ENCODE measurements at regions of chr2 and their contacts with region 1.

Region 1: GRCh38 chr2:186589612-186590349 is at the start of gene ITGAV:
- DNase-seq: peak; percentile 86 to 87
- ATAC-seq: peak; percentile 88 to 90
- H3K4me3 ChIP-seq: peak within 1 kb of the TSS; percentile 69 to 98 (median 73)
- H3K27ac ChIP-seq: peak within 1 kb of the TSS; percentile 88 to 98 (median 92)
- H3K4me1 ChIP-seq: peaks cover 23 to 38% of the 10 kb centered on the region in 2 donors
- H3K27me3 ChIP-seq: no peaks in the 10 kb centered on the region
- CTCF ChIP-seq: peak in 1 of 5 experiments; percentile 7
- POLR2A ChIP-seq: peak; percentile 79 to 89
- total RNA-seq, gene ITGAV: 30.0 to 63.1 (median 47.4) TPM

Region 2: DNA sequence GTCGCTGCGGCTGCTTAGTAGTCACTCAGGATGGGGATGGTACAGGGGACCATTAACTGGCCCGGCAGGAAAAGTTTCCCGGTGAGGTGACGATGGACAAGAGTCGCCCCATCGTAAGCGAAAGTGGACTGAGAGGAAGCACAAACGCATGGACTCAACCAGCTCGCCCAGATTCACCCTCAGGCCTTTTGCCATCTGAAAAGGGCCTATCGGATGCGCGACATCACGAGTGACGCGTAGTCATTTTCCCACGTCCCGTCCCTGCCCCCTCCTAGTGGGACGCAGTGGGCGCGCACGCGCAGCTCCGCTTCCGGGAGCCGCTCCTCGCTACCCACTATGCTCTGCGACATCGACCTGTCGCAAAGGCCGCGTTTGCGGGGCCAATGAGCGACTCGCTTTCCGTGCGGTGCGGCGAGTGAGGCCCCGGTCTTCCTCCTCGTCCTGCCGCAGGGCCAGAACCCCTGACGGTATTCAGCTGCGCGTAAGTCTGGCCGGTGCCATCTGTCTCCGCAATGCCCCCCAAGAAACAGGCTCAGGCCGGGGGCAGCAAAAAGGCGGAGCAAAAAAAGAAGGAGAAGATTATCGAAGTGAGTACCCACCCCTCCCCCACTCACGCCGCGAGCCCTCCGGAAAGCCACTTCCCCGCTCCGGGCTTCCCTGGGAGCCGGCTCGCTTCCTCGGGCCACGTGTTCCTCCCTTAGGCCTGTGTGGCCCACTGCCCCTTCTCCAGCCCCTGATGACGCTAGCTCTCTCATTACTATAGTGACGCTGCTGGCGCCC is 103.7 kb before region 1 on chr2 and contains the start of gene ZC3H15:
- in situ Hi-C with region 1: loop called in 1 of 4 experiments (anchors 10 kb)
- intact Hi-C with region 1: loop called (anchors 2 kb)
- DNase-seq: peak; percentile 95 to 97
- ATAC-seq: peak; percentile 95 to 96
- H3K4me3 ChIP-seq: peak within 1 kb of the TSS; percentile 90 to 99 (median 92)
- H3K27ac ChIP-seq: peak within 1 kb of the TSS; percentile 94 to 97 (median 96)
- H3K4me1 ChIP-seq: peaks cover 48 to 52% of the 10 kb centered on the region in 2 donors
- H3K27me3 ChIP-seq: no peaks in the 10 kb centered on the region
- CTCF ChIP-seq: no peak
- POLR2A ChIP-seq: peak; percentile 88 to 92
- total RNA-seq, gene ZC3H15: 56.3 to 68.9 (median 63.0) TPM

Region 3: GRCh38 chr2:186496401-186496800 is 93.4 kb before region 1 on chr2:
- in situ Hi-C with region 1: loop called in 1 of 4 experiments (anchors 10 kb)
- intact Hi-C with region 1: no loop called
- DNase-seq: no peak
- ATAC-seq: no peak
- H3K4me3 ChIP-seq: no peak overlapping the region
- H3K27ac ChIP-seq: no peak overlapping the region
- H3K4me1 ChIP-seq: peaks cover 27 to 31% of the 10 kb centered on the region in 2 donors
- H3K27me3 ChIP-seq: no peaks in the 10 kb centered on the region
- CTCF ChIP-seq: no peak
- POLR2A ChIP-seq: no peak

Region 4: DNA sequence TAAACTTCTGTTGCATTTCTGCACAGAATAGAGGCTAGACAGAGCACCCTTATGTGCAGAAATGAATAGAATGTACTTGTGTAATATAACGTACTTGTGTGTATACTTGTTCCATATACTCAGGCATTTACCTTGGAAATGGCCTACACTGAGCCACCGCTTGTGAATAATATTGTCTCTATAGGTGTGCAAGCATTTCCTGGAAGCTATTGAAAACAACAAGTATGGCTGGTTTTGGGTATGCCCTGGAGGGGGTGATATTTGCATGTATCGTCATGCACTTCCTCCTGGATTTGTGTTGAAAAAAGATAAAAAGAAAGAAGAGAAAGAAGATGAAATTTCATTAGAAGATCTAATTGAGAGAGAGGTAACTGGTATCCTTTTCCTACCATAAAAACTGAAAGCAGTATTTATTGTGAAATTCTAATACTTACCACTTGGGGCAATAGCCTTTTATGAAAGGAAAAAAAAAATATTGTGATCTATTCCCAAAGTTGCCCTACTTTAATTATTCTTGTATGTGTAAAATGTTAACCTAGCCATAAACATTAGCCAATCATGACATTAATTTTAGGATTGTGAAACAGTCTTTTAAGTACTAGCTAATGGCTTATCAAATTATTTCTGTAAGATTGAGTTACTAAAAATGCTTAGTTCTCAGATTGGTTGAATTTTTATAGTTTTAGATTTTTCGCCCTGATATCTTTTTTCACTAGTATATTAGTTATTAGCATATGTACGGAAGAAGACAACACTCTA is 85.8 kb before region 1 on chr2:
- in situ Hi-C with region 1: loop called in 1 of 4 experiments (anchors 10 kb)
- intact Hi-C with region 1: loop called (anchors 5 kb)
- DNase-seq: no peak
- ATAC-seq: no peak
- H3K4me3 ChIP-seq: no peak overlapping the region
- H3K27ac ChIP-seq: no peak overlapping the region
- H3K4me1 ChIP-seq: no peaks in the 10 kb centered on the region
- H3K27me3 ChIP-seq: no peaks in the 10 kb centered on the region
- CTCF ChIP-seq: peak; percentile 18 to 60 (median 55)
- POLR2A ChIP-seq: no peak

Region 5: DNA sequence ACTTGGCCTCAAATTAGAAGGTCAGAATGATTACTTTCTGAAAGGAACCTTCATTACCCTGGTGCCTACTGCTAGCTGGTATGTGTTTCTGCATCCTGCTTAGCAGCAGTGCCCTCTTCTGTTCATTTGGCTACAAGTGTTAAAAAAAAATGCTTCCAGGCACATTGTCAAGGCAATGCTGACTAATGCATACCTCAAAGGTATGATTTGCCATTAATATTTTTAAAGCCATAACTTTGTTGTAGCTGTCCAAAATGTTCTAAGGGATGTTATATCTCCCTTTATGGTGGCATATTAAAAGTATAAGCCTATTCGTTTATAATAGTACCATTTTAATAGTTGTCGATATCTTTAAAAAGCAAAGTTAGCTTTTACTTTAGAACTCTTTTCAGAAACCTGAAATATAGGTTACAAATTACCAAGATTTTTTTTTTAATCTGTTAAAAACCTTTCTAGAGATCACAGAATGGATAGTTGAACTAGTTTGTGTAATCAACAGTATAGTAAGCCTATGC is 52.1 kb after region 1 on chr2:
- in situ Hi-C with region 1: no loop called
- intact Hi-C with region 1: loop called (anchors 5 kb)
- DNase-seq: peak in 1 of 2 donors; percentile 22
- ATAC-seq: peak; percentile 88 to 96
- H3K4me3 ChIP-seq: no peak overlapping the region
- H3K27ac ChIP-seq: peak overlapping the region in 1 of 4 donors; percentile 11
- H3K4me1 ChIP-seq: no peaks in the 10 kb centered on the region
- H3K27me3 ChIP-seq: no peaks in the 10 kb centered on the region
- CTCF ChIP-seq: peak; percentile 33 to 77 (median 53)
- POLR2A ChIP-seq: no peak

Measured in gastrocnemius medialis (tissue), 4 donors.